H1 (cell line): ENCODE measurements at regions of chr5 and their contacts with region 1.

Region 1: GRCh38 chr5:141960449-141961202 is 2.6 kb upstream of the PCDH12 start:
- DNase-seq: peak; percentile 50 to 92
- H3K4me3 ChIP-seq: no peak overlapping the region
- H3K27ac ChIP-seq: no peak overlapping the region
- H3K4me1 ChIP-seq: peaks cover 2 to 9% (median 9%) of the 10 kb centered on the region in 4 experiments; a peak in 6 of 7 replicates
- H3K27me3 ChIP-seq: no peaks in the 10 kb centered on the region; a peak in 1 of 7 replicates
- CTCF ChIP-seq: peak; percentile 80 to 91 (median 88)
- EP300 ChIP-seq: no peak
- POLR2A ChIP-seq: no peak
- RAD21 ChIP-seq: peak; percentile 87

Region 2: DNA sequence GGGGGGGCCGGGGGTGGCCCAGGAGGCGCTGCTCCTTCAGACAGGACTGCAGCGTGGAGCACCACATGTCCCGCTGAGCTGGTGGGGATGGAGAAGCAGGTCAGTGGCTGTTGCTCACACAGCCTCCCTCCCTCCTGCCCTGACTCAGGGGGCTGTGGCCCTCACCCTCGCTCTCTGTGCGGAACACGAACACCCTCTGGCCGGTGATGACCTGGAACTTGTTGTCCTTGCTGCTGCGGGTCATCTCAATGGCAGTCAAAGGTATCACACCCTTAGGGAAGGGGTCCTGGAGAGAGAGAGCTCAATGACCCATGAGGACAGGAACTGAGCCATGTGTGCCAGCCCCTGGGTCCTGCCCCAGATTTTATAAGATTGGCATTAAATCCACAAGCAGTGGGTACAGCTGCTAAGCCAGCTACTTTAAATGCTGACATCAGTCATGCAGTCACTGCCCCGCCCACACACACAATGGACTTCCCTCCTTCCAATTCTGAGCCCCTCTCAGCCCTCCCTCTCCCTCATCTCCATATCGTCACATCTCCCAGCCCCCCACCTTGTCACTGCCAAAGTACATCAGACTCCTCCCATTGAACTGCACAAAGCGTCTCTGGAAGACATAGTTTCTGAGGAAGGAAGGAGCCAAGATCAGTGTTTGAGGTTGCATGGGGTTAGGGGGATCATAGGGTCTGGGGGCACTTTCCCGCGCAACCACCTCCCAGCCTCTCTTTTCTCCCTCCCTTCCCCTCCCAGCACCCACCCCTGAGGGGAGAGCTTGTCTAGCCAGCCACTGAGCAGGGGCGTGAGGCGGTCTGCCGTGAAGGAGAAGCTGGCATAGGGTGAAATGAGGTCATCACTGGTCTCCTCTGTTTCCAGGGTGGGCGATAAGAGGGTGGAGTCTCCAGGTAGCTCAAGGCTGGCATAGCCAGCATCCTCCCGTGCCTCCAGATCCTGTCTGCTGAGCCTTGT is 287.5 kb before region 1 on chr5:
- CTCF ChIA-PET with region 1: interaction called, 18 read pairs
- POLR2A ChIA-PET with region 1: no interaction called
- DNase-seq: no peak
- H3K4me3 ChIP-seq: no peak overlapping the region
- H3K27ac ChIP-seq: no peak overlapping the region; the same call in 1 of the 2 replicates
- H3K4me1 ChIP-seq: peaks cover 2 to 13% (median 8%) of the 10 kb centered on the region in 4 experiments; a peak in 5 of 7 replicates
- H3K27me3 ChIP-seq: no peaks in the 10 kb centered on the region
- CTCF ChIP-seq: no peak
- EP300 ChIP-seq: no peak
- POLR2A ChIP-seq: no peak
- RAD21 ChIP-seq: no peak

Region 3: DNA sequence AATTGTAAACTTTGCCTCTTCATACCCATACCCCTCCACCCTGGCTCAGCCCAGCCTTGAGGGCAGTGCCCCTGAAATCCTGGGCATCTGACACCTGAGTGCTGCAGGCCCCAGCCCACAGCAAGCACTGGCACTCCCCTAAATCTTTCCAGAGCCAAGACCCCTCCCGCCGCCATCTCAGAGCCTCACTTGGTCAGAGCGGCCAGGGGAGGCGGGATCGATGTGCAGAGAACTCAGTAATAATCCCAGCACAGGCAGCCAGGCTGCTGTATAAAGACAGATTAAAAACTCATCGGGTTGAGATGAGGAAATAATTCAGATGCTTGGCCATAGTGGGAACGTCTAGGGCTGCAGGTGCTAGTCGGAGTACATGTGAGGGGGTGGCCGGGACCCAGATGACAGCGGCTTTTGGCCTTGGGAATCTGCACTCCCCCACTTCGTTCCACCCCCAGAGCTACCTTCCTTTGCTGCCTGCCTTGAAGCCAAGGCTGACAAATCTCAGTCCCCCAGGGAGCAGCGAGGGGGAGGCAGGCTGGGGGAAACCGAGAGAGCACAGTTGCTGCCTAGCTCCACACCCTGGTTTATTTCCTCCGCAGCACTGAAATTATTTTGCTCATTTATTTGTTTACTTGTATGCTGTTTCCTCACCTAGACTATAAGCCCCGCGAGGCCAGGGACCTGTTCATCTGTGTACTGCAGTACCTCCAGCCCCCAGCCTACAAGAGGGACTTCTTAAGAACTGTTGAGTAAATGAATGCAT is 259.1 kb before region 1 on chr5:
- CTCF ChIA-PET with region 1: interaction called, 116 read pairs
- POLR2A ChIA-PET with region 1: no interaction called
- DNase-seq: no peak
- H3K4me3 ChIP-seq: peak overlapping the region in 1 of 4 experiments; percentile 73; a peak in 1 of 8 replicates
- H3K27ac ChIP-seq: no peak overlapping the region
- H3K4me1 ChIP-seq: peaks cover 5 to 9% (median 5%) of the 10 kb centered on the region in 4 experiments
- H3K27me3 ChIP-seq: peaks cover 0 to 36% (median 30%) of the 10 kb centered on the region in 4 experiments; a peak in 6 of 7 replicates
- CTCF ChIP-seq: no peak
- EP300 ChIP-seq: no peak
- POLR2A ChIP-seq: no peak
- RAD21 ChIP-seq: no peak

Region 4: GRCh38 chr5:141898448-141899049 is 62.1 kb before region 1 on chr5:
- CTCF ChIA-PET with region 1: interaction called, 11 read pairs
- POLR2A ChIA-PET with region 1: no interaction called
- DNase-seq: no peak
- H3K4me3 ChIP-seq: no peak overlapping the region
- H3K27ac ChIP-seq: no peak overlapping the region
- H3K4me1 ChIP-seq: no peaks in the 10 kb centered on the region
- H3K27me3 ChIP-seq: no peaks in the 10 kb centered on the region
- CTCF ChIP-seq: no peak
- EP300 ChIP-seq: no peak
- POLR2A ChIP-seq: no peak
- RAD21 ChIP-seq: no peak

Region 5: GRCh38 chr5:141940695-141941271 is 19.8 kb before region 1 on chr5:
- CTCF ChIA-PET with region 1: interaction called, 324 read pairs
- POLR2A ChIA-PET with region 1: interaction called, 121 read pairs
- DNase-seq: no peak
- H3K4me3 ChIP-seq: no peak overlapping the region
- H3K27ac ChIP-seq: no peak overlapping the region
- H3K4me1 ChIP-seq: peaks cover 0 to 9% (median 7%) of the 10 kb centered on the region in 4 experiments; a peak in 5 of 7 replicates
- H3K27me3 ChIP-seq: no peaks in the 10 kb centered on the region; a peak in 1 of 7 replicates
- CTCF ChIP-seq: no peak
- EP300 ChIP-seq: no peak
- POLR2A ChIP-seq: no peak
- RAD21 ChIP-seq: no peak